RWPE1 (cell line): ENCODE measurements at regions of chr13 and their contacts with region 1.

Region 1: DNA sequence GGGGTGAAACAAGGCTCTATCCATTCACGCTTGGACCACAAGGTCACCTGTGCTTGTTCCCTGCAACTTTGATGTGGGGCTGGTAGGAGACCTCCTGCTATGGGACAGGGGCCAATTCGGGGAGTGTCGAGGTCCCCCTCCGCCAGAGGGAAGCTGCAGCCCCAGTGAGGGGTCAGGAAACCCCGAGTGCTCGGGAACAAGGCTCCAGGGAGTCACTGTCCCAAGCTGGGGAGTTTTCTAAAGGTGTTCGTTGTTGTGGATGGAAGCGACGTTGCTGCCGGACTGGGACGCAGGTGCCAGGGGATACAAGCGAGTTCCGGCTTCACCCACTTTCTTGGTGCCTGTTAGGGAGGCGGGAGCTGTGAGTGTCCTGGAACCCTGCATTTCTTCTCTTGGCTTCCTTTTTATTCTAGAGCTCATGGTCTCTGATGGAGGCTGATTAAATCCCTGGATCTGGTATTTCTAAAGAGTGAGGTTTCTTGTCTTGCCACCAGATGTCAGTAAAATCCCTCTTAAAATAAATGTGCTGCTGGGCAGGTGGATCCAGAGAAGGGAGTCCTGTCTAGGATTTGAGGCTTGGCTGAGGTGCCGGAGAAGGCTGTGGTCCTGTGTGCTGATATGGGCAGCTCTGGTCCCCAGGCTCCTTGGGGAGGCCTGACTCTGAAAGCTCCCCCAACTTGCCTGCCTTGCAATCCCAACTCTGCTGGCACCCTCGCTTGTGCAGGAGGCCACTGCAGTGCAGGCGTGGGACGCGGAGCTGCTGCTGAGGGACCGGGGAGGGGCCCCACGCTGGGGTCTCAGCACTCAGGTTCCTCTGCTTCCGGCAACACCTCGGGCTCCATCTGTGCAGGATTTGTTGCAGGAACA is 153.9 kb downstream of the TEX29 start:
- DNase-seq: peak; percentile 71
- H3K27ac ChIP-seq: no peak overlapping the region
- CTCF ChIP-seq: peak; percentile 51

Region 2: DNA sequence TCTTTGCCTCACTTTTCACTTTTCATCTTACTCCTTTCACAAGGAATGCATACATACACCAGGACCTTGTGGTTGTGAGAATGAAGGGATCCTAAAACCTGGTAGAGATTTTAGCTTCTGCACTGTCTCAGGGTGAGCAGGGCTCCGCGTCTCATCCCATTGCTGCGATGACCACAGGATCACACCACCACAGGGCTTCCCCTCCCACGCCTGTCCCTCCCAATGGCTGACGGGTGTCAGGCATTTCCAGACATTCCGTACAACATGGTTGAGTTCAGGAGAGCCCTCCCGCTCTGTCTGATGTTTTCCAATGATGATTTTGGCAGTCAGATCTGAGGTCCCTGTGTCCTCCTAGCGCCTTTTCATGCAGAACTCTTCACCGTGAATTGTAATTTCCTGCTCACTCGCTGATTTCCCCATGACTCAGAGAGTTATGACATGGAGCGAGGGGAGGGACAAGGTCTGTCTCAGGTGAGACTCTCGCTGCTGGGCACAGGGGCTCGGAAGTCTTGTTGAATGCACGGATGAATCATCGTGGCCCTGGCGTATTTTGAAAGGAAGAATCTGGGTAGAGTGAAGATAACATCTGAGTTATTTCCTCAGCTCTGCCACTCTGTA is 51.1 kb before region 1 on chr13:
- CTCF ChIA-PET with region 1: no interaction called
- POLR2A ChIA-PET with region 1: no interaction called
- DNase-seq: peak; percentile 41
- H3K27ac ChIP-seq: no peak overlapping the region
- CTCF ChIP-seq: no peak

Region 3: DNA sequence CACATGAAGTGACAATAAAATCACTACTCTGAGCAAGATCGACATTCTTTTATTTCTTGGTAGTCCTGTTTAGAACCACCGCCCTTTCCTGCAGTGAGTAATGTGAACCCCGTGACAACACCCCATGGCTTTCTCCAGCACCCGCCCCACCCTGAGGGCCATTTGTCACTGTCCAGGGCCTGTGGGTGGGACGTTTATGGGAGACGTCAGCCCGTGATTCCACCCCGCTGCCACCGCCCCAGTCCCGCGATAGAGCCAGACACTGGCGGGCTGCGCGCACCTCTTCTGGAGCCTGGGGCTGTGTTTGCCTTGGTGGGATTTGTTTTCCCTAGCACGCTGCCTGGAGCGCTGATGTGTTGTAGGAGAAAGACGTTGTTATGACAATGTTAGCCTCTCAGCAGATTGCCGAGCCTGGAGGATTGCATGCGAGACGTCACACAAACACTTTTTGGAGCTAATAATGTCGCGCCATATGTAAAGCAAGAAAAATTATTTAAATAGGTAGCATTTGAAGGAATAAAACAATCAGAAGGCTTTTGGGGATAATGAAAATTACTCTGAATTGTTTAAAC is 109.8 kb after region 1 on chr13:
- CTCF ChIA-PET with region 1: no interaction called
- POLR2A ChIA-PET with region 1: no interaction called
- DNase-seq: peak; percentile 5
- H3K27ac ChIP-seq: no peak overlapping the region
- CTCF ChIP-seq: no peak

Region 4: DNA sequence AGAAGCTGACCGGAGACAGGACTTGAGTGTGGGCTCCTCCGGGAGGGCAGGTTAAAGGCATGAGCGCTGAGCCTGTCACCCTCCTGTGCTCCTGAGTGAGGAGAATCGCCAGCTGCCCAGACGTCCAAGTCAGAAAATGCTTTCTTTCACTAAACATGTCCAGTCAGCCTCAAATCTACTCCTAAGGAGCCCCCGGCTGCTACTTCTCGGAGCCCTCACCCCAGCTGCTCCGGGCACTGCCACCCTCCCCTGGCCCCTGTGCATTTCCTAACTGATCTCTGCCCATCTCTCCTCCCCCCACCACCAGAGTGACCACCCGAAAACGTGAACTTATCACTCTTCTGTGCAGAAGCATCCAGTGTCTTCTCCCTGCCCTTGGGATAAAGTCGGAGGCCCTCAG is 315.1 kb after region 1 on chr13:
- CTCF ChIA-PET with region 1: no interaction called
- POLR2A ChIA-PET with region 1: no interaction called
- DNase-seq: no peak
- H3K27ac ChIP-seq: no peak overlapping the region
- CTCF ChIP-seq: no peak

Region 5: GRCh38 chr13:112443995-112444860 is 969.9 kb after region 1 on chr13:
- CTCF ChIA-PET with region 1: interaction called, 29 read pairs
- POLR2A ChIA-PET with region 1: no interaction called
- DNase-seq: peak; percentile 67
- H3K27ac ChIP-seq: no peak overlapping the region
- CTCF ChIP-seq: peak; percentile 77